GM10248 (cell line): ENCODE measurements at regions of chr16 and their contacts with region 1.

Region 1: GRCh38 chr16:85554112-85554813 is 58.9 kb upstream of the GSE1 start:
- DNase-seq: peak; percentile 89
- CTCF ChIP-seq: no peak

Region 2: GRCh38 chr16:85491058-85491771 is 63.0 kb before region 1 on chr16:
- CTCF ChIA-PET with region 1: interaction called, 21 read pairs
- POLR2A ChIA-PET with region 1: no interaction called
- DNase-seq: peak; percentile 79
- CTCF ChIP-seq: peak; percentile 69

Region 3: GRCh38 chr16:85528528-85529387 is 25.5 kb before region 1 on chr16:
- CTCF ChIA-PET with region 1: interaction called, 18 read pairs
- POLR2A ChIA-PET with region 1: no interaction called
- DNase-seq: peak; percentile 62
- CTCF ChIP-seq: peak; percentile 35

Region 4: DNA sequence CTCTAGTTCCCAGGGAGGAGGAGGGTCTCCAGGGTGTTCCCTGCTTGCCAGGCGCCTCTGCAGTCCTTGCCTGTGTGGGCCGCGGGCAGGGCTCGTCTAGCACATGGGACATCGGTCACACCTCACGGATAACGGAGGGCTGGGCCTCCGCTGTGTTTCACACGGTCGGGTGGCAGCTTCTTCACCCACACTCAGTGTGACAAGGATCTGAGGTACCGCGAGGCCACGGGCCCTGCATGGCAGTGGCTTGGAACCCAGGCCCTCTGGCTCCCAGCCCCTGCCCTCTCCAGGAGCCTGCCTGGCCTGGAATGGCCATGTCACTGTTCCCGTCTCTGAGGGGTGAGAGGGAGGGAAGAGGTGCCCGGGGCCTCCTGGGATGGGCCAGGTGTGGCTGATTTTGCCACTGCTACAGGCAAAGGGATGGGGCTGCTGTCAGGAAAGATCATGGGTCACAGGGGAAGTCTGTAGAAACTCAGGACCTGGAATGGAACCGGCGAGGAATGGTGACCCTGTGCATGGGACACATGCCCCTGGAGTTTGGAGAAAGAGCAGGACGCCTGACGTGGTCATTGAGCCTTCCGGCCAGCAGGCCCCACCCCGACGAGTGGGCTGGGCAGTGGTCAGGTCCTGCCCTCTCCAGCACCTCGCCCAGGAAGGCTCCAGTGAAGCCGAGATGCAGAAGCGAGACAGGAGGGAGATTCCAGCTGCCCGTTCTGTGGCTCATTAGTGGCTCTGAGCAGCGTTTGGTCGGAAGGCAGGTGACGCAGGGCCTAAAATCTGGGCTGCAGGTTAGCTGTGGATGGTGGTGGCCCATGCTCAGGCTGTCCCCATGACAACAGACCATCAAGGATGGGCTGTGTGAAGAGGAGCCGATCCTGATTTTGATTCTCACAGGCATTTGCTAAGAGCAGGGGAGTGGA is 17.6 kb before region 1 on chr16:
- CTCF ChIA-PET with region 1: interaction called, 11 read pairs
- POLR2A ChIA-PET with region 1: interaction called, 4 read pairs
- DNase-seq: no peak
- CTCF ChIP-seq: no peak

Region 5: GRCh38 chr16:85569615-85570212 is 15.5 kb after region 1 on chr16:
- CTCF ChIA-PET with region 1: interaction called, 35 read pairs
- POLR2A ChIA-PET with region 1: interaction called, 6 read pairs
- DNase-seq: peak; percentile 90
- CTCF ChIP-seq: no peak